Sciatic nerve (tissue), 2 donors: ENCODE measurements at regions of chr2 and their contacts with region 1.

Region 1: GRCh38 chr2:74715078-74715791 is 61.2 kb downstream of the SEMA4F start:
- DNase-seq: peak; percentile 91
- ATAC-seq: peak; percentile 91

Region 2: GRCh38 chr2:74747341-74748188 is 32.3 kb after region 1 on chr2:
- intact Hi-C with region 1: no loop called
- DNase-seq: no peak
- ATAC-seq: no peak

Region 3: GRCh38 chr2:74876081-74876886 is 161.0 kb after region 1 on chr2:
- intact Hi-C with region 1: loop called (anchors 2 kb)
- DNase-seq: no peak
- ATAC-seq: peak; percentile 80

Region 4: DNA sequence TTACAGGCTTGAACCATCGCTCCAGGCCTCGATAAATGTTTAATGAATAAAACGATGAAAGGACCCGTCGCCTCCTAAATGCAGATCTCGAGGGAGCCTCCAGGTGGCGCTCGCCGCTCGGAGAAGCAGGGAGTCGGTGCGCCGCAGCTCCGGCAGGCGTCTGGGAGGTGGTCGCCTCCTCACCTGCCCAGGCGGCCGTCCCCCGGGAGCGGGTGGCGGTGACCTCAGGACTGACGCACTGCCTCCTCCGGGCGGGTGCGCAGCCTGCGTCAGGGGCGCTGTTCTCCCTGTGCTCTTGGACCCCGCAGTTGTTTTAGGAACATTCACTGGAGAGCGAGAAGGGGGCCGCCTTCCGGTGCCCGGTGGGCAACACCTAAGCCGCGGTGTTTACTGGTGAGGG is 204.6 kb after region 1 on chr2:
- intact Hi-C with region 1: no loop called
- DNase-seq: peak; percentile 80
- ATAC-seq: peak; percentile 30